A549 (cell line): ENCODE measurements at regions of chr16 and their contacts with region 1.

Region 1: DNA sequence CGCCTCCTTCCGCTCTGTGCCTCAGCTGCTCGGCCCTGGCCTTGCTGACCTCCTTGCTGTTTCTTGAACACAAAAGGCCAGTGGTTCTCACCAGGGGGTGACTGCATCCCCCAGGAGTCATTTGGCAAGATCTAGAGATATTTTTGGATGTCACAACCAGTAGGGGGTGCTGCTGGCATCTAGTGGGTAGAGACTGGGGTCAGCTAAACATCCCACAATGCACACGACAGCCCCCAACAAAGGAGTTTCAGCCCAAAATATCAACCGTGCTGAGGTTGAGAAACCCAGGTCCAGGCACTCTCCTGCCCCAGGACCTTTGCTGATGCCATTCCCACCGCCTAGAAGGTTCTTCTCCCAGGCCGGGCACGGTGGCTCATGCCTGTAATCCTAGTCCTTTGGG is 39.7 kb downstream of the ABCC6 start:
- DNase-seq: no peak
- ATAC-seq: no peak
- H3K4me3 ChIP-seq: no peak overlapping the region
- H3K27ac ChIP-seq: no peak overlapping the region
- H3K4me1 ChIP-seq: no peaks in the 10 kb centered on the region
- CTCF ChIP-seq: peak; percentile 26
- EP300 ChIP-seq: no peak
- POLR2A ChIP-seq: no peak
- RAD21 ChIP-seq: no peak

Region 2: DNA sequence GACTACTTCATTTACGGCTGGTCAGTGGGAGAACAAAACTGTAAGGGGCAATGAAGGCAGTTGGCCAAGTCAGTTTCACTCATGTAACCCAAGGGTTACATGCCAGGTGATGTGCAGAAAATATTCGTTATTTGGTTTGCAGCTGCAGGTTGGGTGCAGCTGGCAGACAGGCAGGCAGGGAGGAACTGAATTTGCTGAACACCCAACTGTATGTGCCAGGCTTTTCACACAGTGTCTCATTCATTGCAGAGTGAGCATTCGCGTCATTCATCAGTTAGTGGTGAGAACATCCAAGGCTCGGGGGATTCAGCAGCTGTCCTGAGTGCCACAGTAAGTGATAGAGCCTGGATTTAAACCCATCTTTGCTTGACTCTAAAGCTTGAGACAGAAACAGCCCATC is 20.0 kb before region 1 on chr16:
- CTCF ChIA-PET with region 1: interaction called, 12 read pairs
- POLR2A ChIA-PET with region 1: no interaction called
- DNase-seq: no peak
- ATAC-seq: no peak
- H3K4me3 ChIP-seq: no peak overlapping the region
- H3K27ac ChIP-seq: no peak overlapping the region
- H3K4me1 ChIP-seq: no peaks in the 10 kb centered on the region
- CTCF ChIP-seq: no peak
- EP300 ChIP-seq: no peak
- POLR2A ChIP-seq: no peak
- RAD21 ChIP-seq: no peak